ENCODE measurements at regions of chr7 and their contacts with region 1.

Region 1: DNA sequence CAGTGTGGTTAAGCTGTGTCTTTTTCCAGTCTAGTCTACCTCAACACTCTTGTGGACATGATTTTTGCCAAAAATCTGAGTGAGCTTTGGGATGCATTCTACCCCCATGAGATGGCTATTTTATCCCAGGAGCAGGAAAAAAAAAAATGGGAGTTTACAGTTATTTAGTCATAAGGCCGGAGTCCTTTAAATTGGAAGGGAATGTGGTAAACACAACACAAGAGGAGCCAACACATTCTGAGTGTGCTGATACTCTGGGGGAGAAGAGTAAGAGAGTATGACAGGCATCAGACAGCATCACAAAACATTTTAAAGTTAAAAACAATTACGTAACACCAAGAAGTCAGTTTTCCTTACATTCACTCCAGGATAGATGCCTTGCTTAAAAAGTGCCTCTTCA is 46.1 kb downstream of the C1GALT1 start:
- DNase-seq: no peak
- ATAC-seq: no peak
- H3K4me3 ChIP-seq: no peak overlapping the region
- H3K4me3 Mint-ChIP-seq: no peak overlapping the region
- H3K27ac ChIP-seq: no peak overlapping the region
- H3K27ac Mint-ChIP-seq: no peak overlapping the region
- H3K4me1 ChIP-seq: no peaks in the 10 kb centered on the region
- H3K4me1 Mint-ChIP-seq: peaks cover 13% of the 10 kb centered on the region
- H3K27me3 ChIP-seq: no peaks in the 10 kb centered on the region
- H3K27me3 Mint-ChIP-seq: no peaks in the 10 kb centered on the region
- CTCF ChIP-seq: no peak

Region 2: DNA sequence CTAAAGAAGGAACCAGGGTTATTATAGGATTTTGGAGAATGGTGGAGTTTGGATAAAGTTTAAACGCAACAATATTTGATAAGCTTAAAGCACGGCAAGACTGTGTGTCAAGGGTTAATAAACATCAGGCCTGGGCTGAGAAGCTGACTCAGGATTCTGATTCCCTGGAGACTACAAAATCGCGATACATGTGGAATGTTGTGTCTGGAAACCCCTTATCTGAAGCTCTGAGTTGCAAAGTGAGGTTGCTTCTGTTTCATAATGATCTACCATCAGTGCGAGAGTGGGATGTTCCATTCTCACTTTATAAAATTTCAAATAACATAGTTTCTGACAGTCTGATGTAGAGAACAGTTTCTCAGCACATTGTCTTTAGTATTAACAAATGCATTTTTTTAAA is 38.3 kb before region 1 on chr7:
- CTCF ChIA-PET with region 1: no interaction called
- POLR2A ChIA-PET with region 1: interaction called, 3 read pairs
- intact Hi-C with region 1: loop called (anchors 5 kb)
- DNase-seq: no peak
- ATAC-seq: no peak
- H3K4me3 ChIP-seq: no peak overlapping the region
- H3K4me3 Mint-ChIP-seq: no peak overlapping the region
- H3K27ac ChIP-seq: no peak overlapping the region
- H3K27ac Mint-ChIP-seq: no peak overlapping the region
- H3K4me1 ChIP-seq: peaks cover 20 to 43% of the 10 kb centered on the region in 2 donors
- H3K4me1 Mint-ChIP-seq: peaks cover 53% of the 10 kb centered on the region
- H3K27me3 ChIP-seq: no peaks in the 10 kb centered on the region
- H3K27me3 Mint-ChIP-seq: no peaks in the 10 kb centered on the region
- CTCF ChIP-seq: no peak

Region 3: DNA sequence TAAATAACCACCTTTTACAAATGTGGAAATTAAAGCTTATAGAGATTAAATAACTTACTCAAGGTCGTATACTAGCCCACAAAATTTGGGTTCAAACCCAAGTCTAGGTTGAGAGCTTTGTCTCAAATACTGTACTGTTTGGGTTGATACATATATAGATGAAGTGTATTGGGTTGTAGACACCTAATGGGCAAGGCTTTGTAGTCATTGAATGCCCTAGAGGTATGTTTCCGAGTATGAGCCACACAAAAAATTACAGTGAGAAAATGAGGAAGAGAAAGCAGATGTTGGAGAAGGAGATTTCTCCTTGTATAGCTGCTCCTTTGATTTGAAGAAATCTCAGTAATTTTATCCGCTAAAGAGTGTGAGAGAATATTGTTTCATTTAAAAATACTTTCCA is 14.4 kb after region 1 on chr7:
- CTCF ChIA-PET with region 1: interaction called, 3 read pairs
- POLR2A ChIA-PET with region 1: no interaction called
- intact Hi-C with region 1: loop called (anchors 2 kb)
- DNase-seq: peak; percentile 32
- ATAC-seq: peak; percentile 47
- H3K4me3 ChIP-seq: no peak overlapping the region
- H3K4me3 Mint-ChIP-seq: no peak overlapping the region
- H3K27ac ChIP-seq: peak overlapping the region in 1 of 2 donors; percentile 62
- H3K27ac Mint-ChIP-seq: peak overlapping the region; percentile 47
- H3K4me1 ChIP-seq: peaks cover 7 to 24% of the 10 kb centered on the region in 2 donors
- H3K4me1 Mint-ChIP-seq: peaks cover 40% of the 10 kb centered on the region
- H3K27me3 ChIP-seq: no peaks in the 10 kb centered on the region
- H3K27me3 Mint-ChIP-seq: no peaks in the 10 kb centered on the region
- CTCF ChIP-seq: no peak

Measured in B cell (primary cell).